ENCODE measurements at regions of chr15 and their contacts with region 1.

Region 1: DNA sequence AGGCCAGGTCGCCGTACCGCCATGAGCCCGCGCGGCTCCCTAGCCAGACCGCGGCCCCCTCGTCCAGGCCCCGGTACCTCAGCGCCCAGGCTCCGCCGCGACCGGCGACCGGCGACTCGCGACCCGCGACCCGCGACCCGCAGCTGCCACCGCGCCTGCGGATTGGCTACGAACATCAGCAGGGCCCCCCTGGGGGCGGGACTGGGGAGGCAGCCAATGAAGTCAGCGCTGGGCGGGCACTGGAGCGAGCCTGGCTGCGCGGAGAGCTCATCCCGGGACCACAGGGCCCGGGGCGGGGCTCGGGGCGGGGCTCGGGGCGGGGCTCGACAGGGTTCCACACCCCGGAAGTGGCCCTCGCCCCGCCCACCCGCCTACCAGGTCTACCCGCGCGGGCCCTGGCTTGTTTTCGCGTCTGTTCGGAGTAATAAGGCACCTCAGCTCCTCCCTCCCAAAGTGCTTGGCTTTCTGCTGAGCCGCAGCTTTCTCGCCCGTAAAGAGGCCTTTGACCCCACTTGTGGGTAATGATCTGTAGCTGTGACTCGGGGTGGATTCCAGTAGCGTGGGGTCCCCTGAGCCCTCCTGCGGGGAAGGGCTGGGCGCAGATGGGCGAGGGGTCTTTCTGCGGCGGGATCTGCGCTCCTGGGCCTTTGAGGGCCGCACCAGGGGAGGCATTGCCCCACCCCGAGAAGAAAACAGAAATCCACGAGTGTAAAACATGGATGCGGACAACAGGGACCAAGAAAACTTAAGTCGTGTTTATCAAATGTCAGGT is at the start of gene LYSMD4:
- DNase-seq: peak; percentile 99
- H3K4me3 Mint-ChIP-seq: peak within 1 kb of the TSS; percentile 81
- H3K27ac Mint-ChIP-seq: peak within 1 kb of the TSS; percentile 86
- H3K4me1 Mint-ChIP-seq: peaks cover 22% of the 10 kb centered on the region
- H3K27me3 Mint-ChIP-seq: no peaks in the 10 kb centered on the region
- total RNA-seq, gene LYSMD4: 4.9 TPM

Region 2: GRCh38 chr15:99719096-99719541 is 14.3 kb before region 1 on chr15:
- CTCF ChIA-PET with region 1: interaction called, 4 read pairs
- intact Hi-C with region 1: loop called (anchors 1 kb)
- DNase-seq: no peak
- H3K4me3 Mint-ChIP-seq: no peak overlapping the region
- H3K27ac Mint-ChIP-seq: no peak overlapping the region
- H3K4me1 Mint-ChIP-seq: peaks cover 40% of the 10 kb centered on the region
- H3K27me3 Mint-ChIP-seq: no peaks in the 10 kb centered on the region

Measured in activated naive CD4-positive, alpha-beta T cell treated with anti-CD3 and anti-CD28 coated beads for 36 hours (primary cell).